ENCODE measurements at regions of chr2 and their contacts with region 1.

Region 1: DNA sequence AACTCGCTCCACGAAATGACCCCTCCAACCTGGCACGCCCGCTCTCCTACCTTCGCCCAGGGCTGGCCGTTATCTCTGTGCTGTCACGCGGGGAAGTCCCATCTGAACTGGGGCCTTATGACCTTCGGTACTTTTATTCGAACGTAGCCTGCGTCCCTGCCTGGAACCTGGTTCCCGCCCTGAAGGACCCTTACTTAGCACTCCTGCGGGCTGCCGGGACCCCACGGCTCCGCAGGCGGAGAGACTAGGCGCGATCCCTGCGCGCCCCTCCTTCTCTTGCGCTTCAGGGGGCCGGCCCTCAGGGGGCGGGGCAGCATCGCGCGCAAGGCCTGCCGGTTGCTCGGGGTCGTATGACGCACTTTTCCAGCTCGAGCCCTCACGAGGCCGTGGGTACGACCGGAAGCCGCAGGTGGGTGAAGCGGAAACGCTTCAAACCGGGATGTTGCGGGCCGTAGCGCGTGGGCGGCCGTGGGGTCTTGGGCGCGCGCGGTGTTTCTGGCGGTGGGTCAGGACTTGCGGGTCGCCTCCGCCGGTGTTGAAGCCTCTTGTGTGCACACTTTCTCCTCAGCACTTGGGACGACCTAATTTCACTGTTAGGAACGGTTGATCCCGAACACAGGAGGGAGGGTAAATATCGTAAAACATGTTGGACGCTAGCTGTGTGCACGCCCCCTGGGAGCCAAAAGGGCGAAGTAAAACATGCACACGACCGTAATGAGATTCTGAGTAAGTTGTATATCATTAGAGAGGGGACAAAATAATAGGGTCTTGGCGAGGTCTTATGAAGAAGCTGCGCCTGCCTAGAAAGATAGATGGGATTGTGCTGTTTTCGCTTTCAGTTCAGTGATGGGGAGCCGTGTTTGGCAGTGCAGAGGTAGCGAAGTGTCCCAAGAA is at the starts of genes LIPT1 and TSGA10:
- DNase-seq: peak; percentile 81 to 98 (median 93)
- ATAC-seq: peak; percentile 94
- H3K4me3 ChIP-seq: peak within 1 kb of the TSS; percentile 80 to 92
- H3K4me3 Mint-ChIP-seq: peak within 1 kb of the TSS; percentile 84
- H3K27ac ChIP-seq: peak within 1 kb of the TSS; percentile 95 to 96
- H3K27ac Mint-ChIP-seq: no peak within 1 kb of the TSS
- H3K4me1 ChIP-seq: peaks cover 28% of the 10 kb centered on the region
- H3K4me1 Mint-ChIP-seq: peaks cover 31% of the 10 kb centered on the region
- H3K27me3 ChIP-seq: no peaks in the 10 kb centered on the region
- H3K27me3 Mint-ChIP-seq: no peaks in the 10 kb centered on the region
- CTCF ChIP-seq: no peak
- total RNA-seq, gene LIPT1: 9.7 to 11.0 TPM
- total RNA-seq, gene TSGA10: 14.4 to 14.9 TPM

Region 2: DNA sequence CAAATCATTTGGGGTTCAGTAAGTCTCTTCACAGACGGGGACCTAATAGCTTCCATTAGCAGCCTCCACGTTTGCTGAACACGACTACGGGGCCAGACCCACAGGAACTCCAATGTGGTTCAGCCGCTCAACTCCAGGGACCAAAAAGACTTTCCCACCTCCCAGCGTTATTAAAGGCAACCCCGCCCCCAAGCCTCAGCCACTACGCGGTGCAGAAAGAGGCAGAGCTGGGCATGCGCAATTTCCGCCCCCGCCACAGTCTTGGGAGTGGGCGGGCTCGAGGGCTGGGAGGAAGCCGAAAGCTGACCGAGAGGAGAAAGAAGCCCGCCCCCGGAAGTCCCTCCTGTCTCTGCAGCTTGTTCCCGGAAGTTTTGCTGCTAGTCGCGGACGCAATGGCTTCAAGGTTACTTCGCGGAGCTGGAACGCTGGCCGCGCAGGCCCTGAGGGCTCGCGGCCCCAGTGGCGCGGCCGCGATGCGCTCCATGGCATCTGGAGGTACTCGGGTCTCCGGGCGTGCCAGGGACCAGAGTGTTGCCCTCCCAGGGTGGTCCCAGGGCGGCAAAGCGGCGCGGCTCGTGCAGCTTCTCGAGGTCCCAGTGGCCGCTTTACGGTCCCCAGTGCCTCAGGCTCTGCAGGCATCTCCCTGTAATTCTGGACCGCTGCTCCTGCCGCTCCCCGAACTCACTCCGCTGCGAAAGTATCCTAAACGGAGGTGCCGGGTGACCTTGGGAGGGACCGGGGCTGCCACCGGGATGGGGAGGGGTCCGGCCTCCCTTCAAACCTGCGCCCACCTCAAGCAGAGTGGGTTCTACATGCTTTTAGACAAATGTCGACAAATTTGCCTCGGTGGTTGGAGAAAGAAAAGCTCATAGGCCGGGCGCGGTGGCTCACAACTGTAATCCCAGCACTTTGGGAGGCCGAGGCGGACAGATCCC is 1508.9 kb before region 1 on chr2 and contains the start of gene COX5B:
- CTCF ChIA-PET with region 1: no interaction called
- POLR2A ChIA-PET with region 1: no interaction called
- intact Hi-C with region 1: loop called in 1 of 2 experiments (anchors 5 kb)
- DNase-seq: peak; percentile 97 to 99 (median 99)
- ATAC-seq: peak; percentile 97
- H3K4me3 ChIP-seq: peak within 1 kb of the TSS; percentile 94 to 97
- H3K4me3 Mint-ChIP-seq: peak within 1 kb of the TSS; percentile 91
- H3K27ac ChIP-seq: peak within 1 kb of the TSS; percentile 83 to 90
- H3K27ac Mint-ChIP-seq: peak within 1 kb of the TSS; percentile 95
- H3K4me1 ChIP-seq: peaks cover 20% of the 10 kb centered on the region
- H3K4me1 Mint-ChIP-seq: peaks cover 20% of the 10 kb centered on the region
- H3K27me3 ChIP-seq: no peaks in the 10 kb centered on the region
- H3K27me3 Mint-ChIP-seq: no peaks in the 10 kb centered on the region
- CTCF ChIP-seq: no peak
- total RNA-seq, gene COX5B: 115 to 117 TPM

Region 3: GRCh38 chr2:98455494-98455976 is 699.4 kb before region 1 on chr2:
- CTCF ChIA-PET with region 1: no interaction called
- POLR2A ChIA-PET with region 1: no interaction called
- intact Hi-C with region 1: loop called in 1 of 2 experiments (anchors 10 kb)
- DNase-seq: peak in 4 of 9 experiments; percentile 39 to 84 (median 60)
- ATAC-seq: peak; percentile 56
- H3K4me3 ChIP-seq: no peak overlapping the region
- H3K4me3 Mint-ChIP-seq: peak overlapping the region; percentile 56
- H3K27ac ChIP-seq: peak overlapping the region; percentile 63 to 76
- H3K27ac Mint-ChIP-seq: peak overlapping the region; percentile 92
- H3K4me1 ChIP-seq: peaks cover 98% of the 10 kb centered on the region
- H3K4me1 Mint-ChIP-seq: peaks cover 94% of the 10 kb centered on the region
- H3K27me3 ChIP-seq: no peaks in the 10 kb centered on the region
- H3K27me3 Mint-ChIP-seq: no peaks in the 10 kb centered on the region
- CTCF ChIP-seq: no peak

Region 4: DNA sequence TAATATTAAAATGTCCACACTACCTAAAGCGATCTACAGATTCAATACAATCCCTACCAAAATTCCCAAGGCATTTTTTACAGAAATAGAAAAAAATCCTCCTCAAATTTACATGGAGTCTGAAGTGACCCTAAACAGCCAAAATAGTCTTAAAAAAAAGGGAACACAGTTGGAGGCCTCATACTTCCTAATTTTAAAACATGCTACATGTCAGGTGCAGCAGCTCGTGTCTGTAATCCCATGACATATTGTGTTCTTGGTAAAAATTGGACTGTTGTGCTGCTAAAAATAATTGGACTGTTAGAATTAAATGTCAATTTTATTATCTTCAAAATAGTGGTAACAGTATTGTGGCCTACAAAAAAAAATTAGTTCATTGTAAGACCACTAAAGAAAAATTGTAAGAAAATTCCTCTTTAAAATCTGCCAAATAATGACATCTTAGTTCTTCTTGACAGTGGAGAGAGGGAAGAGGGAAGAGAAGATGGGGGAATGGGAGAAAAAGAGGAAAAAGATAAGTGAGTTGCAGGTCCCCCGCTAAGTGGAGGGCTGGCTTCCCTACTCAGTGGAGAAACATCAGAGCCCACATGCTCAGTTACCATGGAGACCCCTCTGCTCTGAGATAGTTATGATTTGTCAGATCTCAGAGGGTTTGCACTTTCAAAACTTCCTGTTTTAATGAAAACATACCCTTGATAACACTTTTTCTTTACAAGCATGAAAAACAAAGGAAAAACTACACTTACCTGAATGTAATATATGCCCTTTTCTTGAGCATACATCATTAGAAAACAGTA is 500.0 kb before region 1 on chr2:
- CTCF ChIA-PET with region 1: no interaction called
- POLR2A ChIA-PET with region 1: no interaction called
- intact Hi-C with region 1: loop called in 1 of 2 experiments (anchors 5 kb)
- DNase-seq: peak in 5 of 9 experiments; percentile 43 to 90 (median 75)
- ATAC-seq: peak; percentile 51
- H3K4me3 ChIP-seq: no peak overlapping the region
- H3K4me3 Mint-ChIP-seq: peak overlapping the region; percentile 69
- H3K27ac ChIP-seq: peak overlapping the region; percentile 77 to 80
- H3K27ac Mint-ChIP-seq: peak overlapping the region; percentile 99
- H3K4me1 ChIP-seq: peaks cover 92% of the 10 kb centered on the region
- H3K4me1 Mint-ChIP-seq: peaks cover 84% of the 10 kb centered on the region
- H3K27me3 ChIP-seq: no peaks in the 10 kb centered on the region
- H3K27me3 Mint-ChIP-seq: no peaks in the 10 kb centered on the region
- CTCF ChIP-seq: no peak

Region 5: GRCh38 chr2:98867539-98868309 is 287.2 kb before region 1 on chr2:
- CTCF ChIA-PET with region 1: no interaction called
- POLR2A ChIA-PET with region 1: no interaction called
- intact Hi-C with region 1: no loop called
- DNase-seq: no peak
- ATAC-seq: no peak
- H3K4me3 ChIP-seq: no peak overlapping the region
- H3K4me3 Mint-ChIP-seq: no peak overlapping the region
- H3K27ac ChIP-seq: no peak overlapping the region
- H3K27ac Mint-ChIP-seq: no peak overlapping the region
- H3K4me1 ChIP-seq: no peaks in the 10 kb centered on the region
- H3K4me1 Mint-ChIP-seq: no peaks in the 10 kb centered on the region
- H3K27me3 ChIP-seq: no peaks in the 10 kb centered on the region
- H3K27me3 Mint-ChIP-seq: no peaks in the 10 kb centered on the region
- CTCF ChIP-seq: no peak

Region 6: DNA sequence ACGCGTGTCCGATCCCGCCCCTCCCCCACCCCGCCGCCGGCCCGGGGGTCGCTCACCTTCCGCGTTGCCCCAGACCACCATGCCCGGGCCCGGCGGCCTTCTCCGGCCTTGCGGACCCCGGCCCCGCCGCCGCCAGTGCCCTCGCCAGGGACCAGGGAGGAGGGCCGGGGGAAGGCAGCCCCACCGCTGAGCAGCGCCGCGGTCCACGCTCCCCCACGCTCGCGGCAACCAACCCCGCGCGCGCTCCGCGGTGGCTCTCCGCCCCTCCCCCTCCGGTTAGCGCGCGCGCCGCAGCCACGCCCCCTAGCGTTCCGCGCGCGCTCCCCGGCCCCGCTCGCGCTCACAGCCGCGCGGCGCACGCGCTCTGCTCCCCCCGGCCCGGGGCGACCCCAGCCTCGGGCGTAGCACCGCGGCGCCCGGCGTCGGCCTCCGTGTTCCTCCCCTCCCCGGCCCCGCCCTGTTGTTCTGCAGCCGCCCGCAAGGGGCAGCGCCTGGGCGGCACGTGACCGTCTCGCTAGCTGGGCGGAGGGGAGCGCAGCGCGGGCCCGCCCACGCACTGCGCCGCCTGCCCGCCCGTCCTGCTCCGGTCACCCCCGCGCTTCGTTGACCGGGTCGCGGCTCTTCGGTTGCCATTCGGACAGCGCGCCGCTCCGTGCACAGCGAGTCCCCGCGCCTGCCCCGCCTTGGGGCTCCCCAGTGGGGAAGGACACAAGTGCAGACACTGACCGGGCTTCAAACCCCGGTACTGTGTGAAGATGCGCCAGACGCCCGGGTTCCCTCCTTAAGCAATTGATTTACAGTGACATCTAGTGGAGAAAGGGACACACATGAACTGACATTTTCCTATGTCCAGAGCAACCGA is 335.1 kb after region 1 on chr2 and contains the start of gene REV1:
- CTCF ChIA-PET with region 1: no interaction called
- POLR2A ChIA-PET with region 1: no interaction called
- intact Hi-C with region 1: loop called in 1 of 2 experiments (anchors 1 kb)
- DNase-seq: peak; percentile 85 to 97 (median 94)
- ATAC-seq: peak; percentile 88
- H3K4me3 ChIP-seq: peak within 1 kb of the TSS; percentile 87 to 89
- H3K4me3 Mint-ChIP-seq: peak within 1 kb of the TSS; percentile 97
- H3K27ac ChIP-seq: peak within 1 kb of the TSS; percentile 76 to 86
- H3K27ac Mint-ChIP-seq: peak within 1 kb of the TSS; percentile 98
- H3K4me1 ChIP-seq: peaks cover 24% of the 10 kb centered on the region
- H3K4me1 Mint-ChIP-seq: peaks cover 43% of the 10 kb centered on the region
- H3K27me3 ChIP-seq: no peaks in the 10 kb centered on the region
- H3K27me3 Mint-ChIP-seq: no peaks in the 10 kb centered on the region
- CTCF ChIP-seq: peak; percentile 78
- total RNA-seq, gene REV1: 39.3 to 42.3 TPM